ENCODE measurements at regions of chr6 and their contacts with region 1.

Region 1: DNA sequence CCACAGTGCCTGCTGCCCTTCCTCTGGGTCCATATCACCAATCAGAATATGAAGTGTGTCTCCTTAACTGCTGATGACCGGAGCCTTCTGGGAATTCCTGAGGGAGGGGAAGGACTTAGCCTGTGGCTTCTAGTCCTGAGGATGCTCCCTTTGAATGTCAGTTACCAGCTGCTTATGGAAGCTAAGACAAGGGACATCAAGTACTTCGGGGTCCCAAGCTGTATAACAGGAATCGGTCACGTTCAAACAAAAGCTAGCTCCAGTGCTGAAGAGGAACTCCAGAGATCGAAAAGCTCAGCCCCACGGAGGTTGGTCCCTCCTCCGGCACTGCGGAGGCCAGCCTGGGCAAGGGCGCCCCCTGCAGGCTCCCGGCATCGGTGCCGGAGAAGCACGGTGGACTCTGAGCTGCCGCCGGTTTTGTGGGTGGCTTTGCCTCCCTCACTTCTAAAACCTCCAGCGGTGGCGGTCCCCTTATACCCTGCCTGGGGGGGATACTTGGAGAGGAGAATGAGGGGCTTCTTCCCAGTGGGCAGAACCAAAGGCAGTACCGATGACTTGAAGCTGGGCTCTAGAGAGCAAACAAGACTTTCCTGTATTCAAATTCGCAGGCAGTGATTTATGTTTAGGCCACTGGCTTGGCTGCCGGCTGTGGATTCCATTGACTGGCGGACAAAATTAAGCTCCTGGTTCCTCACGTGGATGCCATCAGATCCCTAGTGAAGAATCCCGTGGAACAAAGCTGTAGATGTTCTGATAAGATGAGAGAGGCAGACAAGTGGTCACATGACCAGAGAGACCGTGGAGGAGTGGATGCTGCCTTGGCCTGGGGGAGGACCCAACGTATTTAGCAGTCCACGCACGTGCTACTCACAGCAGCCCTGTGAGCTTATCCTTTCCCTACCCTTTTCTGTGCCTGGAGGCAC is 16.2 kb upstream of the UBR2 start:
- DNase-seq: peak; percentile 79
- H3K4me3 Mint-ChIP-seq: peak overlapping the region; percentile 60
- H3K27ac Mint-ChIP-seq: no peak overlapping the region
- H3K4me1 Mint-ChIP-seq: peaks cover 20% of the 10 kb centered on the region
- H3K27me3 Mint-ChIP-seq: peaks cover 9% of the 10 kb centered on the region

Region 2: GRCh38 chr6:42217519-42218367 is 329.9 kb before region 1 on chr6 and contains the start of gene MRPS10:
- intact Hi-C with region 1: loop called (anchors 2 kb)
- DNase-seq: peak; percentile 88
- H3K4me3 Mint-ChIP-seq: peak within 1 kb of the TSS; percentile 95
- H3K27ac Mint-ChIP-seq: peak within 1 kb of the TSS; percentile 91
- H3K4me1 Mint-ChIP-seq: peaks cover 20% of the 10 kb centered on the region
- H3K27me3 Mint-ChIP-seq: no peaks in the 10 kb centered on the region
- total RNA-seq, gene MRPS10: 39.6 and 40.4 TPM in 2 replicates

Region 3: GRCh38 chr6:42260972-42261371 is 286.7 kb before region 1 on chr6:
- intact Hi-C with region 1: loop called (anchors 1 kb)
- DNase-seq: no peak
- H3K4me3 Mint-ChIP-seq: no peak overlapping the region
- H3K27ac Mint-ChIP-seq: no peak overlapping the region
- H3K4me1 Mint-ChIP-seq: no peaks in the 10 kb centered on the region
- H3K27me3 Mint-ChIP-seq: no peaks in the 10 kb centered on the region

Region 4: GRCh38 chr6:42315991-42316378 is 231.7 kb before region 1 on chr6:
- intact Hi-C with region 1: loop called (anchors 5 kb)
- DNase-seq: no peak
- H3K4me3 Mint-ChIP-seq: no peak overlapping the region
- H3K27ac Mint-ChIP-seq: peak overlapping the region; percentile 90
- H3K4me1 Mint-ChIP-seq: peaks cover 43% of the 10 kb centered on the region
- H3K27me3 Mint-ChIP-seq: no peaks in the 10 kb centered on the region

Region 5: GRCh38 chr6:42378125-42378524 is 169.5 kb before region 1 on chr6:
- intact Hi-C with region 1: loop called (anchors 5 kb)
- DNase-seq: peak; percentile 44
- H3K4me3 Mint-ChIP-seq: peak overlapping the region; percentile 45
- H3K27ac Mint-ChIP-seq: peak overlapping the region; percentile 86
- H3K4me1 Mint-ChIP-seq: peaks cover 59% of the 10 kb centered on the region
- H3K27me3 Mint-ChIP-seq: no peaks in the 10 kb centered on the region

Region 6: GRCh38 chr6:42453031-42453653 is 94.5 kb before region 1 on chr6:
- intact Hi-C with region 1: loop called (anchors 5 kb)
- DNase-seq: peak; percentile 80
- H3K4me3 Mint-ChIP-seq: peak overlapping the region; percentile 98
- H3K27ac Mint-ChIP-seq: no peak overlapping the region
- H3K4me1 Mint-ChIP-seq: peaks cover 34% of the 10 kb centered on the region
- H3K27me3 Mint-ChIP-seq: peaks cover 5% of the 10 kb centered on the region

Region 7: GRCh38 chr6:42493914-42494539 is 53.6 kb before region 1 on chr6:
- intact Hi-C with region 1: no loop called
- DNase-seq: no peak
- H3K4me3 Mint-ChIP-seq: no peak overlapping the region
- H3K27ac Mint-ChIP-seq: no peak overlapping the region
- H3K4me1 Mint-ChIP-seq: no peaks in the 10 kb centered on the region
- H3K27me3 Mint-ChIP-seq: peaks cover 18% of the 10 kb centered on the region

Region 8: GRCh38 chr6:42520786-42521607 is 26.7 kb before region 1 on chr6:
- intact Hi-C with region 1: no loop called
- DNase-seq: no peak
- H3K4me3 Mint-ChIP-seq: no peak overlapping the region
- H3K27ac Mint-ChIP-seq: peak overlapping the region; percentile 90
- H3K4me1 Mint-ChIP-seq: peaks cover 18% of the 10 kb centered on the region
- H3K27me3 Mint-ChIP-seq: no peaks in the 10 kb centered on the region